ENCODE measurements at regions of chr13 and their contacts with region 1.

Region 1: DNA sequence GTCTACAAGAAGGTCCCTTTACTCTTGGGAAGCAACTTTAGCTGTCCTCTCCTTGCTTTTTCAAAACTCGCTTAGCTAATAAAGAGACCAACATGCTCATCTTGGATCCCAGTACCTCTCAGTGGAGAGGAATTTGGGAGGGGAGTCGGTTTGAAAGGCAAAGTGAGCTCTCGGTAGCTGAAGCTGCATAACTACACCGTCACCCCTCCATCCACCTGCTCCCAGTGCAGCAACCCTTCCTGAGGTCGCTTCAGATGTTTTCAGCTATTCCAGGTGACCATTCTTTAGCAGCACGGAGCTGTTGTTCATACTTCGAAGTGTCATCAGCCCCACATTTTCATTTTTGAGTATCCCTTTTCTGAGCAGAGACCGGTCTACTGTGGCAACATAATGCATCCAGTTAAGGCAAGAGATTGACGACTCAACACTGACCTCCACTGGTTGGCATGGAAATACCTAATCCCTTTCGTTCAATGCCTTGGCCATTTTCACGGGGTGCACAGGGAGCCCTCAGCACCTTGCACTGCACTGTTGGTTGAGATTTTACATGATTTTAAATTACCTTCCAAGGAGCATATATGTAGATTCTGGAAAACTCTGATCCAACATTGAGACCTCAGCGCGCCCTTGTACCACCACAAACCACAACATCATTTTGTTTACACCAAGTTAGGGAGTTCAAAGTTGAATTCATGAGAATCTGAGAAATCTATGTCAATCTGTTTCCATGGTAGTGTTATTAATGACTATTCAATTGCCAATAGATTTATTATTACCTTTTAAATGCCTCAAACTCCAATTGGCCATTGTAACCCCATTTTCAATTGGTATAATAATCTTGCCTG is 42.2 kb downstream of the DLEU7 start:
- DNase-seq: peak; percentile 52 to 56
- H3K4me3 ChIP-seq: no peak overlapping the region
- H3K27ac ChIP-seq: no peak overlapping the region
- H3K4me1 ChIP-seq: no peaks in the 10 kb centered on the region
- H3K27me3 ChIP-seq: no peaks in the 10 kb centered on the region
- CTCF ChIP-seq: peak; percentile 37 to 85 (median 76)
- POLR2A ChIP-seq: no peak

Region 2: DNA sequence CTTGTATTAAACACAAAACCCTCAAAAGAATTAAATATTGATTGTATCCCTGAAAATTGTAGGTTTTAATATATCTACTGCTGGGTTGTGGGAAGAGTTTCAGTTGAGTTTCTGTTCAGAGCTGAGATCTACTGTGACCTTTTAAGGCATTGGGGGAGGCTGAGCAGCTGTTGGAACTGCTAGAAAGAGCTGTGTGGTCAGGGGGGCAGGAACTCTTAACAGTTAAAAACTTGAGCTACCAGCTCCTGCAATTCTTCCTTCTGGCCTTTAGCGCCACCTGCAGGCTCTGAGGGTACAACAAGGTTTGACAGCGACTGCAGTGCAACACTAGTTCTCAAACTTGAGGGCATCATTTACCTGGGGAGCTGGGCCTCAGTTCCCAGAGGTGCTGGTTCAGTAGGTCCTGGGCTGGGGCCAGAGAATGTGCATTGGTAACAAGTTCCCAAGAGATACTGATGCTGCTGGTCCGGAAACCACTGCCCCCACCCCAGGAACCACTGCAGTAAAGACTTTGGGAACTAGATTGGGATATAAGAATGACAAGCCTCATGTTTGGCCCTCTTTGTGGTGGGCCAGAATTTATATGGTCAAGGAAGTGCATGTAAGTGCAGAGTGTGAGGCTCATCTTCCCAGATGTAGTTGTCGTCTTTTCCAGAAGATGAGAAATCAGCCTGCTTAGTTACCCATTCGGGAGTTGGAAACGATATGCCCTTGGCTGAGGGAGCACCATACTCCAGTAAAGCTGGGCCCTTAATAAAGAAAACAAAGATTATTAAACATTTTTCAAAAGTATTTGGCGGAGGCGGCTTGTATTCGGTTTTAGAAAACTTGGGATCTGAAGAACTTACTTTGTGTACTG is 110.9 kb after region 1 on chr13:
- intact Hi-C with region 1: loop called (anchors 10 kb)
- DNase-seq: peak; percentile 88 to 92
- H3K4me3 ChIP-seq: no peak overlapping the region
- H3K27ac ChIP-seq: no peak overlapping the region
- H3K4me1 ChIP-seq: peaks cover 23 to 47% of the 10 kb centered on the region in 2 donors
- H3K27me3 ChIP-seq: no peaks in the 10 kb centered on the region
- CTCF ChIP-seq: peak; percentile 37 to 88 (median 82)
- POLR2A ChIP-seq: no peak

Measured in thyroid gland (tissue), 4 donors.